OCI-LY7 (cell line): ENCODE measurements at regions of chr17 and their contacts with region 1.

Region 1: GRCh38 chr17:57995076-57995956 is 7.3 kb upstream of the VEZF1 start:
- DNase-seq: peak; percentile 77
- H3K4me3 ChIP-seq: no peak overlapping the region
- H3K27ac ChIP-seq: no peak overlapping the region
- H3K4me1 ChIP-seq: peaks cover 36% of the 10 kb centered on the region
- CTCF ChIP-seq: peak; percentile 78

Region 2: DNA sequence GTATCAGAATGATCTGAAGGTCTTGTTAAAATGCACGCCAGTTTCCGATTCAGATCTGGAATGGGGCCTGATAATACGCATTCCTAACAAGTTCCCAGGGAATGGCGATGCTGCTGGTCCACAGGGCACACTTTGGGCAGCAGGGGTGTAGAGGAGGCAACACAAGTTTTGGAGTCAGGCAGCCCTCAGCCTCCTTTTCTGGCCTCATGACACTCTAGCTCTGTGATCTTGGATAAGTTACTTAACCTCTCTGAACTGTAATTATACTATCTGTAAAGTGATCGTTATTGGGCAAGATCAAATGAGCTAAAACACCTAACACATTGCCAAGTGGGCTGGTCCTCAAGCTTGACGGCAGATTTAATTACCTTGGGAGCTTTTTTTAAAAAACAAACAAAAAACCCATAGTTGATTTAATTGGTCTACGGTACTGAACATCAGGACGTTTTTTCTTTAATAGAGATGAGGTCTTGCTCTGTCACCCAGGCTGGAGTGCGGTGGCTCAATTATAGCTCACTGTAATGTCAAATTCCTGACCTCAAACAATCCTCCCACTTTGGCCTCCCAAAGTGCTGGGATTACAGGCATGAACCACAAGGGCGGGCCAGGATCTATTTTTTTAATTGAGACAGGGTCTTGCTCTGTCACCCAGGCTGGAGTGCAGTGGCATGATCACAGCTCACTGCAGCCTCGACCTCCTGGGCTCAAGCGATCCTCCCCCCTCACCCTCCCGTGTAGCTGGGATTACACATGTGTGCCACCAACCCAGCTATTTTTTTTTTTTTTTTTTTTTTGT is 135.5 kb before region 1 on chr17:
- CTCF ChIA-PET with region 1: interaction called, 6 read pairs
- POLR2A ChIA-PET with region 1: interaction called, 7 read pairs
- intact Hi-C with region 1: loop called (anchors 1 kb)
- DNase-seq: no peak
- H3K4me3 ChIP-seq: no peak overlapping the region
- H3K27ac ChIP-seq: no peak overlapping the region
- H3K4me1 ChIP-seq: peaks cover 7% of the 10 kb centered on the region
- CTCF ChIP-seq: no peak

Region 3: DNA sequence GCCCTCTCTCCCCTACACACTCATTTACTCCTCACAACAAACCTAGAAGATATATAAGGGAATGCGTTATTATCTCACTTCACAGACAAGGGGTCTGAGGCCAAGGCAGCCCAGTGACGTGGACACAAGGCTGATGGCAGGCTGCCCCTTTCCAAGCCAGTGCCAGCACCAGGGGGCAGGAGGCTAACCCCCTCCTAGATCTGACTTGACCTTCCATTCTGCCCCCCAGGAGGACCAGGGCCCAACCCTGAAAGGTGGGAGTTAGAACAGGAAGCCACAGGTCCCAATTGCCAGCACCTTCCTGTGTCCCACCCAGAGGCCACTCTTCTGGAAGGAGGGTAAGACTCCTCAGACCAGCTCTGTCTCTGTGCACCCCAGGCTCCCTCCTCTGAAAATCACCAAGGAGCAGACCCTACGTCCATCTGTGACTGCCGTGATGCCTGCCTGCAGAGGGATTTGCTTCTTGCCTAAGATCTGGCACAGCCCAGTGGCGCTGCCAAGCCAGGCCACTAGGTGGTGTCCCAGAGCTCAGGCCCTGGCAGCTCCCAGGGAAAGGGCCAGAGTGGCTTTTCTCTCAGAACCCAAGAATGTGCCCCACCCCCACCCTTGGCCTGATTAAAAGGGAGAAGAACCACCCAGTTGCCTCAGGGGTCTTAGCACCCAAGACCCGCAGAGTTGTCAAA is 103.0 kb before region 1 on chr17:
- CTCF ChIA-PET with region 1: no interaction called
- POLR2A ChIA-PET with region 1: interaction called, 4 read pairs
- intact Hi-C with region 1: loop called (anchors 1 kb)
- DNase-seq: peak; percentile 72
- H3K4me3 ChIP-seq: no peak overlapping the region
- H3K27ac ChIP-seq: no peak overlapping the region
- H3K4me1 ChIP-seq: no peaks in the 10 kb centered on the region
- CTCF ChIP-seq: peak; percentile 94

Region 4: DNA sequence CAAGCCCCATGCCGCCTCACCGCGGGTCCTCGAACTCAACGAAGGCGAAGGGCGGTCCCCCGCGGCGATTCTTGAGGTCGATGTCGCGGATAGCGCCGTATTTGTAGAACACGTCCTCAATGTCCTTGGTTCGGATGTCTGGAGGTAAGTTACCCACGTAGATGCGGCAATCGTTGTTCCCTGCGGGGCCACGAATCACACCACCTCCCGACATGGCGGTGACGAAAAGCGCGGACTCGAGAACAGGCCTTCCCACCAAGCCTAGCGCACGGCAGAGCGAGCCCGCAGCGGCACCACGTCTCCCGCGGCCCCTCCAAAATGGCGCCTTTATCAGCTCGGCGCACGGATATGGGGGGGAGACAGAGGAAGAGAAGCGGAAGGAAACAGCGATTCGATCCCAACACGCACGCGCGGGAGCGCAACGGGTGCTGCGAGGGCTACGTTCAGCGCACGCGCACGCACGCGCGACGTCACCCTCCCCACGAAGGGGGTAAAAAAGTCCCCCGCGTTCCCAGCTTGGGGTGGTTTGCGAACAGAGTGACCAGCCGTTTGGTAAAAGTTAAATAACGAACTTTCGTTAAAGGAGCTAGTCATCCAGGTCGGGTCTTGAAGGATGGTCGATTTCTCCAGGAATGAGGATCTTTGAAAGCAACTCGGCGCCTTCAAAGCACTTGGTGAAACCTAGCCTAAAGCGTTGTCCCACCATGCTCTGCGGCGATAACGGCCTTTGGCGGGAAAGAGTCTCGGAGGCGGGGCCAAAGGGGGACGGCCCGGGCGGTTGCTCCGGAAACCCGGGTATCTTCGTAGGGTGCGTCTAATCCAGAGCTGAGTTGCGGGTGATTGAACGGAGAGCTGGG is 11.8 kb after region 1 on chr17 and contains the start of gene SRSF1:
- CTCF ChIA-PET with region 1: no interaction called
- POLR2A ChIA-PET with region 1: interaction called, 16 read pairs
- intact Hi-C with region 1: no loop called
- DNase-seq: peak; percentile 99
- H3K4me3 ChIP-seq: peak within 1 kb of the TSS; percentile 96
- H3K27ac ChIP-seq: peak within 1 kb of the TSS; percentile 89
- H3K4me1 ChIP-seq: peaks cover 45% of the 10 kb centered on the region
- CTCF ChIP-seq: no peak
- total RNA-seq, gene SRSF1: 582 and 677 TPM in 2 replicates

Region 5: GRCh38 chr17:58112970-58113631 is 117.8 kb after region 1 on chr17:
- CTCF ChIA-PET with region 1: no interaction called
- POLR2A ChIA-PET with region 1: no interaction called
- intact Hi-C with region 1: loop called (anchors 2 kb)
- DNase-seq: peak; percentile 73
- H3K4me3 ChIP-seq: no peak overlapping the region
- H3K27ac ChIP-seq: no peak overlapping the region
- H3K4me1 ChIP-seq: no peaks in the 10 kb centered on the region
- CTCF ChIP-seq: peak; percentile 95